Thyroid gland (tissue), 4 donors: ENCODE measurements at regions of chr3 and their contacts with region 1.

Region 1: DNA sequence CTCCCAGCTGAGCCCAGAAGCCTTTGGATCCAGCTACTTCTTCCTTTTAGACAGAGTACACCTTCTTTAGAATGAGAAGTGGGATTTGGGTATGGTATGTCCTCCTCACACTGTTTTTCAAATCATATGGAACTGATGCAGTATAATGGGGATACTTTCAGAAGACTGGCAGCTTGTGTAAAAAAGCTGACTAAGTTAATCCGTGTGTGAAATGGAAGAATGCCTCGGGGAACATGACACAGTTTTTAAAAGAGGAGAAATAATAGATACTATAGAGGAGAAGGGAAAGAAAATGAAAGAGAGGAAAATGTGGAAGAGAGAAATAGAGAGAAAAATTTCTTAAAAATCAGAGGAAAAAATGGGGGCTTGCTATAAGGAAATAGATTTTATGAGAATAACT is 47.7 kb downstream of the TUSC7 start:
- DNase-seq: no peak
- H3K4me3 ChIP-seq: no peak overlapping the region
- H3K27ac ChIP-seq: no peak overlapping the region
- H3K4me1 ChIP-seq: no peaks in the 10 kb centered on the region
- H3K27me3 ChIP-seq: no peaks in the 10 kb centered on the region
- CTCF ChIP-seq: no peak
- POLR2A ChIP-seq: no peak

Region 2: GRCh38 chr3:115537669-115538068 is 1219.6 kb before region 1 on chr3:
- intact Hi-C with region 1: no loop called
- DNase-seq: no peak
- H3K4me3 ChIP-seq: no peak overlapping the region
- H3K27ac ChIP-seq: no peak overlapping the region
- H3K4me1 ChIP-seq: no peaks in the 10 kb centered on the region
- H3K27me3 ChIP-seq: no peaks in the 10 kb centered on the region
- CTCF ChIP-seq: no peak
- POLR2A ChIP-seq: no peak

Region 3: DNA sequence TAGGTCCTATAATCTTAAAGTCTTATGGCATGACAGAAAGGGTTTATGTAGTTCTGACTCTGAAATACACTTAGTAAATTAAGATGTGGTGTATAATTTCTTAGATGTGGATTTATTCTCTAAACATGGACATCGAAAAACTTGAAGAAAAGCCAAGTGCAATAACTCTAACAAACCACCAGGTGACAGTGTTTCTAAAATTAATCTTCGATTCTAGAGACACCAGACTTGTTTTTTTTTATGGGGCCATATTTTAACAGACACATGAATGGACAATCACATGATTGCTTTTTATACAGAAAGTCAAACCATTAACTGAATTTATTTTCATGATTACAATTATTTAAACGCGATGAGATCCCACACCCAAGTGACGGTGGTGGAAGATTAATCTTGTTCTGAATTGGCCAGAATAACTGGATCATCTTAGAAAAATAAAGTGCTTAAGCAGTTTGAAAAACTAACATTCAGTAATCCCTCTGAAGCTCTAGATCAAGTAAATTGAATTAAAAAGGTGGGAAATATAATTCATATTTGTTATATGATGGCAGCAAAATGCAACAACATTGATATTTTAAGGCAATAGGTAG is 617.1 kb before region 1 on chr3:
- intact Hi-C with region 1: loop called (anchors 5 kb)
- DNase-seq: no peak
- H3K4me3 ChIP-seq: no peak overlapping the region
- H3K27ac ChIP-seq: no peak overlapping the region
- H3K4me1 ChIP-seq: no peaks in the 10 kb centered on the region
- H3K27me3 ChIP-seq: no peaks in the 10 kb centered on the region
- CTCF ChIP-seq: peak in 5 of 6 experiments; percentile 66 to 81 (median 73)
- POLR2A ChIP-seq: no peak

Region 4: GRCh38 chr3:116824208-116824607 is 66.9 kb after region 1 on chr3:
- intact Hi-C with region 1: no loop called
- DNase-seq: no peak
- H3K4me3 ChIP-seq: no peak overlapping the region
- H3K27ac ChIP-seq: no peak overlapping the region
- H3K4me1 ChIP-seq: no peaks in the 10 kb centered on the region
- H3K27me3 ChIP-seq: no peaks in the 10 kb centered on the region
- CTCF ChIP-seq: no peak
- POLR2A ChIP-seq: no peak